ENCODE measurements at regions of chr6 and their contacts with region 1.

Region 1: GRCh38 chr6:26537846-26538571 is at the start of gene HMGN4:
- DNase-seq: peak; percentile 93
- H3K4me3 ChIP-seq: peak within 1 kb of the TSS; percentile 97
- H3K27ac ChIP-seq: peak within 1 kb of the TSS; percentile 93
- H3K4me1 ChIP-seq: peaks cover 69% of the 10 kb centered on the region
- CTCF ChIP-seq: 0 out of 2 replicates have a peak, but pooled peaks have one; percentile 22
- total RNA-seq, gene HMGN4: 113 and 116 TPM in 2 replicates

Region 2: DNA sequence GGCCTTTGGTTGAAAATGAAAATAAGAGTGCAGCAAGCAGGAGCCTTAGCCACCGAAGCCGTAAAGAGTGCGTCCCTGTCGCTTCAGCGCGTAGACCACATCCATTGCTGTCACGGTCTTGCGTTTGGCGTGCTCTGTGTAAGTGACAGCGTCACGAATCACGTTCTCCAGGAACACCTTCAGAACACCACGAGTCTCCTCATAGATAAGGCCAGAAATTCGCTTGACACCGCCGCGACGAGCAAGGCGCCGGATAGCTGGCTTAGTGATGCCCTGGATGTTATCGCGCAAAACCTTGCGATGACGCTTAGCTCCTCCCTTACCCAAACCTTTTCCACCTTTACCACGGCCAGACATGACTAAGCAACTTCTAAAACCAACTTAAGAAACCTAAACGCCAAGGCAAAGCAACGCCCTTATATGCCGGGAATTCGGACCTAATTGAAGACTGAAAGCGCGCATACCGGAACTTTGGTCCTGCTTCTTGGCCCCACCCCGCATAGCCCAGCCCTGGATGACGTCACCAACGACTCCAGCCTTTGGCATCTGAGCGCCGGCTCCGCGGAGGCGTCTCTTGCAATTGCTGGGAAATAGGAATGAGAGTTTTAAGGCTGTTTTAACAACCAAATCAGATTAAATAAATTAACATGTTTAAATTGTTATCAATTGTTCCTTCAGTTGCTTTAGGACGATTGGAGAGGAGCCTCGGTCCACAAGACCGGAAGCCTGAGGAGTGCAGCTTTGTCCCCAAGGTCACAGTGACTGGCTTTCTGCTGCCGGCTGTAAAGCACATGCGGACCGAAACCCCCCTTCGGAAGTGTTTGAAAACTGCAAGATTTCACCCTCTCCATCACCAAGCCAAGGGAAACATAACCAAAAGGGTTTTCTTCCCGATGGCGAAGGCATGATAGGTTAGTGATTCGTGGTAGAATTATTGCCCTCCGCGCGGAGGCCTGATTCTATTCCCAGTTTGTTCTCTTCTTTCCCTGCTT is 252.6 kb before region 1 on chr6:
- CTCF ChIA-PET with region 1: no interaction called
- POLR2A ChIA-PET with region 1: interaction called, 5 read pairs
- intact Hi-C with region 1: loop called (anchors 2 kb)
- DNase-seq: peak; percentile 99
- H3K4me3 ChIP-seq: peak overlapping the region; percentile 80
- H3K27ac ChIP-seq: peak overlapping the region; percentile 96
- H3K4me1 ChIP-seq: peaks cover 32% of the 10 kb centered on the region
- CTCF ChIP-seq: 0 out of 2 replicates have a peak, but pooled peaks have one; percentile 0

Region 3: DNA sequence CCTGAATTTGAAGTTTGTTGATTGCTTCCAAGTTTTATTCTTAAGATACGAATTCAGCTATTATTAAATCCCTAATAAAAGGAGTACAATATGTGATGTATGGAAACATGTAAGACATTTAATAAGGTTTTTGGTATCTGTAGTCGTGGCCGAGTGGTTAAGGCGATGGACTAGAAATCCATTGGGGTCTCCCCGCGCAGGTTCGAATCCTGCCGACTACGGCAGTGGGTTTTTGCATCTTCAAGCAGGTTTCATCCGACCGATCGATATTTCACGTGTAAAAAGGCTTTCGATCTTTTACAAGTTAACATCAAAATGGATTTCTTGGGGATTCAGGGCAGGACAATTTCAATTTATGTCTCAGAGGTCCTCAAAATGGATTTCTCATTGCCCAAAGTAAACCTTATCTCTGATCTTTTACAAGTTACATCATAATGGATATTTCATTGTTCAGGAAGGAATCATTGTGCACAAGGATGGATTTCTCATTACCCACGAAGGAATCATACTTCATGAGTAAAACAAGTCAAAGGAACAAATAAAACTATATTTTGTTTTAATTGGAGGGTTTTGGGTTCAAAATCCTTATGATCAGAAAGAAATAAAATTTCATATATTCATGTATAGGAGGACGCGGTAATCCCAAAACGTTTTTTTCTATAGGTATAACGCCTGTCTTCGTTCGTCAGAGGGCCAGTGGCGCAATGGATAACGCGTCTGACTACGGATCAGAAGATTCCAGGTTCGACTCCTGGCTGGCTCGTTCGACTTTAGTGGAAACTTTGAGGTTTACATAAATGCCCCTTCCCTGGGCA is 210.4 kb before region 1 on chr6:
- CTCF ChIA-PET with region 1: no interaction called
- POLR2A ChIA-PET with region 1: interaction called, 5 read pairs
- intact Hi-C with region 1: loop called (anchors 1 kb)
- DNase-seq: peak; percentile 68
- H3K4me3 ChIP-seq: peak overlapping the region; percentile 66
- H3K27ac ChIP-seq: no peak overlapping the region
- H3K4me1 ChIP-seq: peaks cover 44% of the 10 kb centered on the region
- CTCF ChIP-seq: no peak

Region 4: DNA sequence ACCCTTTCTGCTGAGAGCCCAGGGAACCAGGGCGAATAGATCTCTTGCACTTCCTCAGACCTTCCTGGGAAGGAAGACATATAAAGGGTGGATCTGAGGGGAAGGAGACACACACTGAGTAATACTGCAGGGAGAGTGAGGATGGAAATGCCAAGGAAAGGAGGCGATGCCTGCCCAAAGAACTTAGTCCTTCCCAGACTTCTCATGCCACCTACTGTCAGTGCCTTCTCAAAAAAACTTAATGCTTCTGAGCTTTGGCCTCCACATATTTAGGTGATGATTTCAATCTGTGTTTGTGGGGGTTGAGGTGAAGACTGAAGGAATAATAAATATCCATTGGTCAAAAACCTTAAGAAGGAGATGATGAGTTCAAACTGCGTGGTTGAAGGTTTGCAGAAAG is 126.3 kb before region 1 on chr6:
- CTCF ChIA-PET with region 1: no interaction called
- POLR2A ChIA-PET with region 1: no interaction called
- intact Hi-C with region 1: no loop called
- DNase-seq: no peak
- H3K4me3 ChIP-seq: no peak overlapping the region
- H3K27ac ChIP-seq: no peak overlapping the region
- H3K4me1 ChIP-seq: peaks cover 27% of the 10 kb centered on the region
- CTCF ChIP-seq: no peak

Region 5: GRCh38 chr6:26473758-26474438 is 64.1 kb before region 1 on chr6:
- CTCF ChIA-PET with region 1: no interaction called
- POLR2A ChIA-PET with region 1: interaction called, 13 read pairs
- intact Hi-C with region 1: loop called (anchors 2 kb)
- DNase-seq: peak; percentile 95
- H3K4me3 ChIP-seq: peak overlapping the region; percentile 73
- H3K27ac ChIP-seq: peak overlapping the region; percentile 96
- H3K4me1 ChIP-seq: peaks cover 55% of the 10 kb centered on the region
- CTCF ChIP-seq: no peak

Region 6: GRCh38 chr6:26520853-26521599 is 17.0 kb before region 1 on chr6:
- CTCF ChIA-PET with region 1: interaction called, 3 read pairs
- POLR2A ChIA-PET with region 1: interaction called, 11 read pairs
- intact Hi-C with region 1: loop called (anchors 1 kb)
- DNase-seq: peak; percentile 91
- H3K4me3 ChIP-seq: peak overlapping the region; percentile 72
- H3K27ac ChIP-seq: peak overlapping the region; percentile 84
- H3K4me1 ChIP-seq: peaks cover 36% of the 10 kb centered on the region
- CTCF ChIP-seq: no peak